ENCODE measurements at regions of chr13 and their contacts with region 1.

Region 1: DNA sequence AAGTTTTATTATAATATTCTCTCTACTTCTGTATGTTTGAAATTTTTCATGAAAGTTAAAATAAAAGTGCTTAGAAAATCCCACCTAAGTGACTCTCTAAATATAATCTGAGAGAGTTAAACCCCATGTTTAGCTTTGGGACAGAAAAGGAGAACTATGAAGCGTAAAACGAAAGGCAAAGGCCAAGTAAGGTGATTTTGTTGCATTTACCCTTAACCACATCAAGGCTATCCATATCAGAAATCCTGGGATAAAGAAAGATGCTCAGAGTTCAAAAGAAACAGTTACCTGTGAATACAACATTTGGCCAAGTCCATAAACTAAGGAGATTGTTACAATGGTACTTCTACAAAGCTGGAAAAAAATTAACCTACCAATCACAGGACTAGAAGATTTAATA is 31.3 kb downstream of the UBL3 start:
- DNase-seq: no peak
- ATAC-seq: no peak
- H3K4me3 ChIP-seq: no peak overlapping the region
- H3K27ac ChIP-seq: no peak overlapping the region
- H3K4me1 ChIP-seq: no peaks in the 10 kb centered on the region
- H3K27me3 ChIP-seq: no peaks in the 10 kb centered on the region
- CTCF ChIP-seq: no peak
- EP300 ChIP-seq: no peak
- POLR2A ChIP-seq: no peak
- RAD21 ChIP-seq: no peak

Region 2: GRCh38 chr13:29830000-29830399 is 10.9 kb after region 1 on chr13:
- CTCF ChIA-PET with region 1: no interaction called
- POLR2A ChIA-PET with region 1: interaction called, 3 read pairs
- in situ Hi-C with region 1: no loop called
- intact Hi-C with region 1: loop called (anchors 1 kb)
- DNase-seq: no peak
- ATAC-seq: no peak
- H3K4me3 ChIP-seq: no peak overlapping the region
- H3K27ac ChIP-seq: no peak overlapping the region
- H3K4me1 ChIP-seq: no peaks in the 10 kb centered on the region
- H3K27me3 ChIP-seq: no peaks in the 10 kb centered on the region
- CTCF ChIP-seq: no peak
- EP300 ChIP-seq: no peak
- POLR2A ChIP-seq: no peak
- RAD21 ChIP-seq: no peak

Region 3: DNA sequence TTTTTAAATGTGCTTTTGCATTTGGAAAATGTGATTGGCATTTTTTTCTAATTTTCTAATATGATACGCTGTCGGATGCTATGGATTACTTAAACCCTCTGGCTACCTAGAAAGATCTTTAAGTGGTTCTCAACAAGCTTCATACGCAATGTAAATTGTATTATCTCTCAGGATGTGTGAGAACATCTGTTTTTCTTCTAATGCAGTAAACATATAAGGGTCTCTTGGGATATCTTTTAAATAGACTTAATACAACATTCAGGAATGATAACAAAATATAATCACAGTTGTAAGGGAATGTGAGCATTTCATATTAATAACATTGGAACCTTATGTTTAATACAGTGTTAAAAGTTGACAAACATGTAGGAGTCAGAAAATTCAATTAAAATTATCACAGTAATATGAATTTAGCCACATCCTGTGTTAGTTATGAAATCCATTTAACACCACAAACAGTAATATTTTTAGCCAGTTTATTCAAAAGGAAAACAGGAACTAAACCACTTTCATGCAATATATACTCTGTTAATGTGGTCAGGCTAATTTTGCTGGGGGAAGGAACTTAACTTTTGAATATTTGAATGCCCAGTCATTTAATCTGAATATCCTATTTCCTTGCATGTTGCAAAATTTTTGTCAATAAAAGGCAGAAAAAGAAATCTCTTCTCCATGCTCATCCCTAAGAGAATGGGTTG is 901.2 kb after region 1 on chr13:
- CTCF ChIA-PET with region 1: no interaction called
- POLR2A ChIA-PET with region 1: no interaction called
- in situ Hi-C with region 1: no loop called
- intact Hi-C with region 1: no loop called
- DNase-seq: no peak
- ATAC-seq: no peak
- H3K4me3 ChIP-seq: no peak overlapping the region
- H3K27ac ChIP-seq: no peak overlapping the region
- H3K4me1 ChIP-seq: no peaks in the 10 kb centered on the region
- H3K27me3 ChIP-seq: peaks cover 0 to 7% of the 10 kb centered on the region in 2 experiments; a peak in 4 of 5 replicates
- CTCF ChIP-seq: no peak
- EP300 ChIP-seq: no peak
- POLR2A ChIP-seq: no peak
- RAD21 ChIP-seq: no peak

Measured in K562 (cell line).